Panc1 (cell line): ENCODE measurements at regions of chr9 and their contacts with region 1.

Region 1: GRCh38 chr9:95399261-95399660 is 81.8 kb upstream of the FANCC start:
- DNase-seq: no peak
- ATAC-seq: no peak
- H3K4me3 ChIP-seq: no peak overlapping the region
- H3K27ac ChIP-seq: no peak overlapping the region
- H3K4me1 ChIP-seq: no peaks in the 10 kb centered on the region
- H3K27me3 ChIP-seq: no peaks in the 10 kb centered on the region
- CTCF ChIP-seq: no peak

Region 2: GRCh38 chr9:95242613-95243012 is 156.6 kb before region 1 on chr9:
- CTCF ChIA-PET with region 1: interaction called, 13 read pairs
- POLR2A ChIA-PET with region 1: no interaction called
- in situ Hi-C with region 1: no loop called
- intact Hi-C with region 1: no loop called
- DNase-seq: no peak
- ATAC-seq: no peak
- H3K4me3 ChIP-seq: no peak overlapping the region
- H3K27ac ChIP-seq: no peak overlapping the region
- H3K4me1 ChIP-seq: no peaks in the 10 kb centered on the region
- H3K27me3 ChIP-seq: no peaks in the 10 kb centered on the region
- CTCF ChIP-seq: no peak

Region 3: DNA sequence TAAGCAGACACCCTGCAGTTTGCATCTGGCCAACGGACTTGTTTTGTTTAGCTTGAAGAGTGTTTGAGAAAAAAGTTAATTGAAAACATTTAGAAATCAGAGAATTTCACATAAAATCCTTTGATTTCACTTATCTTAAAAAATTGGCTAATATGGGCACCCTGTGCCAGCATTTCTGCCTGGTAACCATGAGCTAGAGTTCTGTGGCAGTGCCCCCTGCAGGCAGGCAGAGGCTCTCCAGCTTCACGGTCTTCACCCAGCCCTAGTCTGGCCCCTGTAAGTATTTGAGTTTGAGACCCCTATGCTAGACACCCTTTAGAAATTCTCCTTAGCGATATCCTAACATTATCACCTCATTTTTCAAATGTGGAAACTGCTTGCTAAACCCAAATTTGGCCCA is 63.0 kb before region 1 on chr9:
- CTCF ChIA-PET with region 1: no interaction called
- POLR2A ChIA-PET with region 1: no interaction called
- in situ Hi-C with region 1: no loop called
- intact Hi-C with region 1: no loop called
- DNase-seq: no peak
- ATAC-seq: no peak
- H3K4me3 ChIP-seq: no peak overlapping the region
- H3K27ac ChIP-seq: no peak overlapping the region
- H3K4me1 ChIP-seq: no peaks in the 10 kb centered on the region
- H3K27me3 ChIP-seq: no peaks in the 10 kb centered on the region
- CTCF ChIP-seq: peak; percentile 50